ENCODE measurements at regions of chrX and their contacts with region 1.

Region 1: DNA sequence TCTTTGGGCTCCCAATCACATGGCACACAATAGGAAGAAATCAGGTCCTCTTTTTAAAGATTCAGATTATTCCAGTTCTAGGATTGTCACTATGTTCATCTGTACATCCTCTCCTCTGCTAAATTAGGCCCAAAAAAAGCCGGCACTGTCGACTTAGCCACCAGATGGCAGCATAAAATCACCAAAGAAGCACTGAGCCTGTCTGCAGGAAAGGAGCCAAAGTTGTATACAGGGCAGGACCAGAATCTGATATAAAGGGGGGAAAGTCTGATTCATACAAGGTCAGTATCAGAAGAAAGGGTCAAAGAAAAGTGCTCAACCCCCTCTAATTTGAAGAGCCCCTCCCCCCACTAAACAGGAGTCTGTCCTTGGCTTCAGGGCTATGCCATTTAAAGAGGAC is 292.5 kb downstream of the CHIC1 start:
- DNase-seq: peak; percentile 23 to 34
- ATAC-seq: peak; percentile 65 to 73
- H3K4me3 ChIP-seq: no peak overlapping the region
- H3K27ac ChIP-seq: no peak overlapping the region
- H3K4me1 ChIP-seq: peaks cover 0 to 3% of the 10 kb centered on the region in 2 donors
- H3K27me3 ChIP-seq: no peaks in the 10 kb centered on the region
- CTCF ChIP-seq: peak; percentile 36 to 82 (median 76)
- POLR2A ChIP-seq: no peak

Region 2: DNA sequence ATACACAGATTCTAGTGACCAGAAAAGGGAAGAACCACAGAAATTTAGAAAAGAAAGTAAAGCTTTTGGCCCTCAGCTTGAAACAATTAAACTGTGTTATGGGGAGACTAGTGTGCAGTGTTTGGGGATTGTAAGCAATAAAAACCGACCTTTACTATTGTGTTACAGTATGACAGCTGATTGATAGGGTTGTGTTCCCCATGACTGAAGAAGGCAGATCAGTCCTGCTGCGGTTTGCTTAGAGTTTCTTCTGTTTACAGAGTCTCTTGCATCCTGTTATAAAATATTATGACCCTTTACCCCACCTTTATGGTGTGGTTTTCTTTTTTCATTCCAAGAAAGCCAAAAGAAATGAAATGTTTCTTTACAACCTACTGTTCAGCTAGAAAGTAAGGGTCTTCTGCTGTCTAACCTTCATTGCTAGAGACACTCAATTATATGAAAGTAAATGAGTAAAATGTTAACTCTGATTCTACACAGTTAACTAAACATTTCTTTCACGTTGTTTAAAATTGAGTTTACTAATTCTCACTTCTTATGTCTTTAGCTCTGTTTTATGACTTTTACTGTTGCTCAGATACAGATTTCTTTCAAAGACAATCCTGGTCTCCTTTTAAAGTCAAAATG is 274.4 kb before region 1 on chrX:
- in situ Hi-C with region 1: no loop called
- intact Hi-C with region 1: no loop called
- DNase-seq: no peak
- ATAC-seq: no peak
- H3K4me3 ChIP-seq: no peak overlapping the region
- H3K27ac ChIP-seq: no peak overlapping the region
- H3K4me1 ChIP-seq: no peaks in the 10 kb centered on the region
- H3K27me3 ChIP-seq: no peaks in the 10 kb centered on the region
- CTCF ChIP-seq: no peak
- POLR2A ChIP-seq: no peak

Region 3: DNA sequence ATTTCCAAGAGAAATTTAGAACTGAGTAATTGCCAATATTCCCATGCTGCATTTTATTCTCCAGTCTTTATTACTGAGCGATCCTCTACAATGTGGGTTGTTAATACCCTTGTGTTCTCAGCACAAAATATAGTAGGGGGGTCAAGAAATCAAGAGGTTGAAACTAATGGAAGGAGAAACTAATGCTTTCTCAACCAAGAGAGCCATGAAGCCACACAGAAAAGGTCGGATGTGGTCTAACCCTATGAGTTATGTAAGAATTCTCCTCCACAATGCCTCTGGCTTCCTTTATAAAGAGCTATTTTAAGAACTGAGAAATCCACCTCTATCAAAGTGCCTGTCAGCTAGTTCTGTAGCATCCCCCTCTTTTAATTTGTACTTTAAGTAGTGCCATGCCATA is 24.0 kb before region 1 on chrX:
- in situ Hi-C with region 1: no loop called
- intact Hi-C with region 1: no loop called
- DNase-seq: no peak
- ATAC-seq: no peak
- H3K4me3 ChIP-seq: no peak overlapping the region
- H3K27ac ChIP-seq: no peak overlapping the region
- H3K4me1 ChIP-seq: peaks cover 0 to 31% of the 10 kb centered on the region in 2 donors
- H3K27me3 ChIP-seq: no peaks in the 10 kb centered on the region
- CTCF ChIP-seq: no peak
- POLR2A ChIP-seq: no peak

Region 4: GRCh38 chrX:73842541-73843234 is 12.9 kb before region 1 on chrX:
- in situ Hi-C with region 1: no loop called
- intact Hi-C with region 1: no loop called
- DNase-seq: no peak
- ATAC-seq: no peak
- H3K4me3 ChIP-seq: no peak overlapping the region
- H3K27ac ChIP-seq: no peak overlapping the region
- H3K4me1 ChIP-seq: peaks cover 0 to 47% of the 10 kb centered on the region in 2 donors
- H3K27me3 ChIP-seq: no peaks in the 10 kb centered on the region
- CTCF ChIP-seq: no peak
- POLR2A ChIP-seq: no peak

Region 5: DNA sequence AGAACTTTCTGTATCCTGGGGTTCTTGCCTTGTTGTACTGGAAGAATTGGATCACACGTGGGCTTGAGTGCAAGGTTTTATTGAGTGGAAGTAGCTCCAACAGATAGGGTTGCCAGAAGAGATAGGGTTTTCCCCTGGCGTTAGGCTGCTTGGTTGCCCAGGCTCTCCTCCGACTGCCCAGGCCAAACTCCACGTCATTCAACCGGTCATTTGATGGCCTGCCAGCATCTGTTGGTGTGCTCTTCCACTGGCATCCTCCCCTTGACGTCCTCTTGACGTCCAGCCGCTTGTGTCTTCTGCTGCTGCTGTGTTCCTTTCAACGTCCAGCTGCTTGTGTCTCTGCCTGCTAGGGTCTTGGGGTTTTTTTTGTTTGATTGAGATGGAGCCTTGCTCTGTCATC is 108.1 kb after region 1 on chrX:
- in situ Hi-C with region 1: loop called in 1 of 4 experiments (anchors 10 kb)
- intact Hi-C with region 1: no loop called
- DNase-seq: peak; percentile 49 to 81
- ATAC-seq: peak; percentile 92 to 95
- H3K4me3 ChIP-seq: no peak overlapping the region
- H3K27ac ChIP-seq: peak overlapping the region; percentile 76 to 86 (median 80)
- H3K4me1 ChIP-seq: peaks cover 0 to 37% of the 10 kb centered on the region in 2 donors
- H3K27me3 ChIP-seq: no peaks in the 10 kb centered on the region
- CTCF ChIP-seq: no peak
- POLR2A ChIP-seq: peak in 1 of 2 donors; percentile 15

Region 6: DNA sequence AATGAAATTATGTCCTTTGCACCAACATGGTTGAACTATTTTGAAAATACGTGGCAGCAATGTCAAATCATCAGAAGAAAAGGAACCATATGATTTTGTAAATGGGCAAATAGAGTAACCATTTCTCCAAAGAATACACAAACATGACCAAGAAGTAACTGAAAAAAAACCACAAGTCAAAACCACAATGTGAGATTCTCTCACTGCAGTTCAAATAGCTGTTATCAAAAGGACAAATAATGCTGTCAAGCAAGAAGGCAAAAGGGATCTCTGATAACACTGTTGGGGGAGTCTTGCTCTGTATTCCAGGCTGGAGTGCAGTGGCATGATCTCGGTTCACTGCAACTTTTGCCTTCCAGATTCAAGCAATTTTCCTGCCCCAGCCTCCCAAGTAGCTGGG is 167.7 kb after region 1 on chrX:
- in situ Hi-C with region 1: loop called (anchors 5 to 10 kb)
- intact Hi-C with region 1: no loop called
- DNase-seq: no peak
- ATAC-seq: no peak
- H3K4me3 ChIP-seq: no peak overlapping the region
- H3K27ac ChIP-seq: no peak overlapping the region
- H3K4me1 ChIP-seq: no peaks in the 10 kb centered on the region
- H3K27me3 ChIP-seq: no peaks in the 10 kb centered on the region
- CTCF ChIP-seq: no peak
- POLR2A ChIP-seq: no peak

Region 7: DNA sequence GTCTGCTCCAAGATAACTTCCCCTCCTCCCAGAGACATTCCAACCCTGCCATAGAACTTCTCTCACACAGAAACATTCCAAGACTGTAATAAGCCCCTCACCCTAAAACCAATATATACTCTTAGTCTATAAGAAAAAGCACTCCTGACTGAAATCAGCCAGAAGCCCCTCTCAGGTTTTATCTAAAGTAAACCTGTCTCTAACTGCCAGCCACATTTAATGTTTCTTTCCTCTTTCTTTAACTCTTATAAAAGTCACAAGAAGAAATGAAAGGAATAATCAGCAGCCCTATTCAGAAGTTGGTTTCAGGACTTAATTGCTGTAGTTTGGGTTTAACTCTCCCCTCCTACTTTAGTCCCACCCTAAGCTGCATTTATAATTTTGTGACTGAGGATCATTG is 283.4 kb after region 1 on chrX:
- in situ Hi-C with region 1: loop called (anchors 5 to 25 kb)
- intact Hi-C with region 1: no loop called
- DNase-seq: no peak
- ATAC-seq: no peak
- H3K4me3 ChIP-seq: no peak overlapping the region
- H3K27ac ChIP-seq: no peak overlapping the region
- H3K4me1 ChIP-seq: no peaks in the 10 kb centered on the region
- H3K27me3 ChIP-seq: no peaks in the 10 kb centered on the region
- CTCF ChIP-seq: no peak
- POLR2A ChIP-seq: no peak

Region 8: DNA sequence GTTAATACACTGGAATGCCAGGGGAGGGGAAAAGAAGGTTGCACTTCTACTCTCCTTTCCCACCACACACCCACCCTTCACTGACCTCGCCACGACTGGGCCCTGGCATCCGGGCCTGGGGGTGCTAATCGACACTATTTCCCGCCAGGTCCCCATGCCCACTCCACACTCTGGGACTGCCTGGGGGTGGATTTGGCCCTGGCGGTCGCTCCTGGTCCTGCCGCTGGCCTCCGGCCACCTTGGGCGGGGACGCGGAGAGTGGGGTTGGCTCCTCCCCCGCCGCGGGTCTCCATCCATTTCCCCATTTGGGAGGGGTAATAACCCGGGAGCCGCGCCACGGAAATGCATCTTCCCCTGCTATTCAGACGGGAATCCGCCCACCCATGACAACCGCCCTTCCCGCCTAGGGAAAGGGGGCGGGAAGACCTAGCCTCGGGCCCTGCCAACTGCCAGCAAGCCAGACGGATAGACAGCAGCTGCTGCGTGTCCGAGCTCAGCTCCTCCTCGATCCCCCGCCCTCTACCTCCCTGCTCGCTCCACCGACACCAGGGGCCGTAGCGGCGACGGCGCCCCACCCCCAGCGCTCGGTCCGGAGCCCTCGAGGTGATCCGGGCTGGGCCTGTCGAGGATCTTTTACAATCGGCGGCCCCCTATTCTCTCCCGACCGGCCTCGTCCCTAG is 680.7 kb after region 1 on chrX:
- in situ Hi-C with region 1: loop called in 2 of 4 experiments (anchors 25 kb)
- intact Hi-C with region 1: no loop called
- DNase-seq: peak; percentile 53 to 77
- ATAC-seq: peak; percentile 75 to 78
- H3K4me3 ChIP-seq: peak overlapping the region; percentile 62 to 69 (median 62)
- H3K27ac ChIP-seq: peak overlapping the region; percentile 89 to 93 (median 90)
- H3K4me1 ChIP-seq: peaks cover 6% of the 10 kb centered on the region in 2 donors
- H3K27me3 ChIP-seq: no peaks in the 10 kb centered on the region
- CTCF ChIP-seq: peak; percentile 18 to 60 (median 54)
- POLR2A ChIP-seq: no peak